Activated CD4-positive, alpha-beta T cell treated with anti-CD3 and anti-CD28 coated beads for 36 hours (primary cell): ENCODE measurements at regions of chr3 and their contacts with region 1.

Region 1: GRCh38 chr3:13012228-13012691 is 61.0 kb downstream of the IQSEC1 start:
- DNase-seq: peak; percentile 86
- ATAC-seq: peak; percentile 57
- H3K4me3 Mint-ChIP-seq: peak overlapping the region; percentile 72
- H3K27ac Mint-ChIP-seq: peak overlapping the region; percentile 98
- H3K4me1 Mint-ChIP-seq: peaks cover 85% of the 10 kb centered on the region
- H3K27me3 Mint-ChIP-seq: no peaks in the 10 kb centered on the region

Region 2: GRCh38 chr3:12663936-12664908 is 348.0 kb before region 1 on chr3 and contains the start of gene RAF1:
- CTCF ChIA-PET with region 1: no interaction called
- POLR2A ChIA-PET with region 1: no interaction called
- intact Hi-C with region 1: loop called in 1 of 2 experiments (anchors 1 kb)
- DNase-seq: peak; percentile 99
- ATAC-seq: peak; percentile 94
- H3K4me3 Mint-ChIP-seq: peak within 1 kb of the TSS; percentile 81
- H3K27ac Mint-ChIP-seq: peak within 1 kb of the TSS; percentile 96
- H3K4me1 Mint-ChIP-seq: peaks cover 25% of the 10 kb centered on the region
- H3K27me3 Mint-ChIP-seq: no peaks in the 10 kb centered on the region
- total RNA-seq, gene RAF1: 66.8 to 74.7 TPM

Region 3: DNA sequence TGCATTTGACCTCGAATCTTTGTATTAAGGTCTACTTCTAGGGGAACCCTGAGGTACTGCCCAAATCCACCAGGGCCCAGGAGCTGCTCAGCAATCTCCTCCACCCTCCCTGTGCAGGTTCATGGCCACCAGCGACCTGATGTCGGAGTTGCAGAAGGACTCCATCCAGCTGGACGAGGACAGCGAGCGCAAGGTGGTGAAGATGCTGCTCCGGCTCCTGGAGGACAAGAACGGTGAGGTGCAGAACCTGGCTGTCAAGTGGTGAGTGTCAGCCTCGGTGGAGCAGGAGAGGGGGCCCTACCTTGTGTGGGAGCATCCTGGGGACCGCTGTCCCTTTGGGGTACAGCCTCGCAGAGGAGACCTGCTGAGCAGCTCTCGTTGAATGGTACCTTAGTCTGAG is 208.9 kb before region 1 on chr3:
- CTCF ChIA-PET with region 1: no interaction called
- POLR2A ChIA-PET with region 1: no interaction called
- intact Hi-C with region 1: no loop called
- DNase-seq: no peak
- ATAC-seq: no peak
- H3K4me3 Mint-ChIP-seq: no peak overlapping the region
- H3K27ac Mint-ChIP-seq: no peak overlapping the region
- H3K4me1 Mint-ChIP-seq: no peaks in the 10 kb centered on the region
- H3K27me3 Mint-ChIP-seq: no peaks in the 10 kb centered on the region

Region 4: GRCh38 chr3:12948891-12949711 is 63.2 kb before region 1 on chr3:
- CTCF ChIA-PET with region 1: interaction called, 4 read pairs
- POLR2A ChIA-PET with region 1: no interaction called
- intact Hi-C with region 1: loop called in 1 of 2 experiments (anchors 1 kb)
- DNase-seq: peak; percentile 78
- ATAC-seq: peak; percentile 89
- H3K4me3 Mint-ChIP-seq: peak overlapping the region; percentile 40
- H3K27ac Mint-ChIP-seq: peak overlapping the region; percentile 90
- H3K4me1 Mint-ChIP-seq: peaks cover 44% of the 10 kb centered on the region
- H3K27me3 Mint-ChIP-seq: no peaks in the 10 kb centered on the region

Region 5: GRCh38 chr3:12994607-12995388 is 17.5 kb before region 1 on chr3:
- CTCF ChIA-PET with region 1: interaction called, 32 read pairs
- POLR2A ChIA-PET with region 1: interaction called, 6 read pairs
- intact Hi-C with region 1: loop called (anchors 1 to 2 kb)
- DNase-seq: peak; percentile 93
- ATAC-seq: peak; percentile 91
- H3K4me3 Mint-ChIP-seq: peak overlapping the region; percentile 90
- H3K27ac Mint-ChIP-seq: peak overlapping the region; percentile 81
- H3K4me1 Mint-ChIP-seq: peaks cover 56% of the 10 kb centered on the region
- H3K27me3 Mint-ChIP-seq: no peaks in the 10 kb centered on the region

Region 6: GRCh38 chr3:13045904-13046568 is 33.8 kb after region 1 on chr3:
- CTCF ChIA-PET with region 1: no interaction called
- POLR2A ChIA-PET with region 1: no interaction called
- intact Hi-C with region 1: no loop called
- DNase-seq: peak; percentile 49
- ATAC-seq: peak; percentile 80
- H3K4me3 Mint-ChIP-seq: no peak overlapping the region
- H3K27ac Mint-ChIP-seq: no peak overlapping the region
- H3K4me1 Mint-ChIP-seq: peaks cover 12% of the 10 kb centered on the region
- H3K27me3 Mint-ChIP-seq: no peaks in the 10 kb centered on the region

Region 7: DNA sequence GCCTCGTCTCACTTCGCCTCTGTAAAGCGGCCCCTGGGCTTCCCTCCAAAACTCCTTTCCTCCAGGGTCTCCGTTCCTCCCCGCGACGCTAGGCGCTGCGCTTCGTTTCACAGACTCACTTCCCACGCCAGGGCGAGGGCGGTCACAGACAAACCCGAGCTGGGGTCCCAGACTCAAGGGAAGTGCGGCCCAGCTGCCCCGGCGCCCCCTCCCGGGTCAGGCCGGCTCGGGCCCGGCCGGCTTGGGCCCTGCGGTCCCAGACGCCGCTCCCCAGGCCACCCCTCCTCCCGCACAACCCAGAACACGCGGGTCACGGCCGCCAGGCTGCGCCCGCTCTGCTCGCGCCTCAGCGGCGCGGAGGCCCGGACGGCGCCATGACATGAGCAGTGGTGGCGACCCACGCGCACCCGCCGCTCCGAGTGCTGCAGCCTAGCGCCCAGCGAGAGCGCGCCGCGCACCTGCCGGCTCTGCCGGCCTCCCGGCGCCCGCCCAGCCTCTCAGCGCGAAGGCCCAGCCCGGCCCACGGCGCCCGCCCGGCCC is 407.3 kb after region 1 on chr3:
- CTCF ChIA-PET with region 1: no interaction called
- POLR2A ChIA-PET with region 1: no interaction called
- intact Hi-C with region 1: loop called in 1 of 2 experiments (anchors 2 kb)
- DNase-seq: peak; percentile 79
- ATAC-seq: peak; percentile 30
- H3K4me3 Mint-ChIP-seq: peak overlapping the region; percentile 77
- H3K27ac Mint-ChIP-seq: peak overlapping the region; percentile 95
- H3K4me1 Mint-ChIP-seq: peaks cover 58% of the 10 kb centered on the region
- H3K27me3 Mint-ChIP-seq: no peaks in the 10 kb centered on the region

Region 8: GRCh38 chr3:14431892-14432834 is 1419.9 kb after region 1 on chr3:
- CTCF ChIA-PET with region 1: no interaction called
- POLR2A ChIA-PET with region 1: no interaction called
- intact Hi-C with region 1: loop called in 1 of 2 experiments (anchors 10 kb)
- DNase-seq: peak; percentile 97
- ATAC-seq: peak; percentile 88
- H3K4me3 Mint-ChIP-seq: peak overlapping the region; percentile 63
- H3K27ac Mint-ChIP-seq: peak overlapping the region; percentile 96
- H3K4me1 Mint-ChIP-seq: peaks cover 86% of the 10 kb centered on the region
- H3K27me3 Mint-ChIP-seq: no peaks in the 10 kb centered on the region